Psoas muscle (tissue), 8 donors: ENCODE measurements at regions of chrX and their contacts with region 1.

Region 1: DNA sequence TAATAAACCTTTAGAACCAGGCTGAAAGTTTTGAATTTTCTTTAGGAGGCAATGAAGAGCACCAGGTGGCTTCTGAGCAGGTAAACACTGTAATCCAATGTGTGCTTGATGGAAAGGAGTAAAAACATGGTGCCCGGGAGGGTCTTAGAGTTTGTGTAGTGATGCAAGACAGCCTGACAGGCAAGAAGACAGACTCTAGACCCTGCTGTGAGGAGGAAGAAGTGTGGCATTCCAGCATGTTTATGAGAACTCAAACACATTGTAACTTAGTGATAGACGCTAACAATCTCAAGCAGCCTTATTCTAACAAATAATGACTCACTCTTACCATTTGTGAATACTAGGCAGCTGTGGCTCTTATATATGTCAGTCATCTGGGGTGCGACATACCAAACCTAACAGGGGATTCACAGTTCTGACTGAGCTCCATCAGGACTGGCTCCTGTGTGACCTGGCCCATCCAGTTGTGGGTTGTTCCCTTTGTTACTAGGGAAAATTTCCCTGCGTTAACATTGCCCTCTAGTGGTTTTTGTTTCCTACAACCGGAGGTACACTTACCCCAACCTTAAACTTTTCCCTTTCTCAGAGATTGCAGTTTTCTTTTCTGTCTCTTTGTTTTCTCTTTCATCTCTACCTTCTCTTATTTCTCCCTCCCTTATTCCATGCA is 53.8 kb downstream of the VSIG4 start:
- DNase-seq: no peak
- ATAC-seq: peak in 3 of 4 donors; percentile 51 to 69 (median 59)
- H3K4me3 ChIP-seq: no peak overlapping the region
- H3K27ac ChIP-seq: no peak overlapping the region
- H3K4me1 ChIP-seq: no peaks in the 10 kb centered on the region
- H3K27me3 ChIP-seq: peaks cover 0 to 13% (median 0%) of the 10 kb centered on the region in 3 donors
- CTCF ChIP-seq: peak; percentile 56

Region 2: GRCh38 chrX:65581661-65582339 is 404.3 kb before region 1 on chrX:
- intact Hi-C with region 1: loop called (anchors 1 to 5 kb)
- DNase-seq: peak in 1 of 2 donors; percentile 37
- ATAC-seq: peak; percentile 55 to 85 (median 76)
- H3K4me3 ChIP-seq: no peak overlapping the region
- H3K27ac ChIP-seq: no peak overlapping the region
- H3K4me1 ChIP-seq: no peaks in the 10 kb centered on the region
- H3K27me3 ChIP-seq: peaks cover 0 to 22% (median 0%) of the 10 kb centered on the region in 3 donors
- CTCF ChIP-seq: peak; percentile 76

Region 3: GRCh38 chrX:65595460-65595876 is 390.6 kb before region 1 on chrX:
- intact Hi-C with region 1: loop called in 1 of 2 experiments (anchors 5 kb)
- DNase-seq: peak; percentile 91 to 93
- ATAC-seq: peak; percentile 90 to 98 (median 94)
- H3K4me3 ChIP-seq: no peak overlapping the region
- H3K27ac ChIP-seq: peak overlapping the region; percentile 58
- H3K4me1 ChIP-seq: peaks cover 8% of the 10 kb centered on the region
- H3K27me3 ChIP-seq: peaks cover 0 to 3% (median 0%) of the 10 kb centered on the region in 3 donors
- CTCF ChIP-seq: peak; percentile 96

Region 4: GRCh38 chrX:65745992-65746391 is 240.1 kb before region 1 on chrX:
- intact Hi-C with region 1: loop called in 1 of 2 experiments (anchors 10 kb)
- DNase-seq: no peak
- ATAC-seq: no peak
- H3K4me3 ChIP-seq: no peak overlapping the region
- H3K27ac ChIP-seq: no peak overlapping the region
- H3K4me1 ChIP-seq: no peaks in the 10 kb centered on the region
- H3K27me3 ChIP-seq: no peaks in the 10 kb centered on the region
- CTCF ChIP-seq: no peak

Region 5: DNA sequence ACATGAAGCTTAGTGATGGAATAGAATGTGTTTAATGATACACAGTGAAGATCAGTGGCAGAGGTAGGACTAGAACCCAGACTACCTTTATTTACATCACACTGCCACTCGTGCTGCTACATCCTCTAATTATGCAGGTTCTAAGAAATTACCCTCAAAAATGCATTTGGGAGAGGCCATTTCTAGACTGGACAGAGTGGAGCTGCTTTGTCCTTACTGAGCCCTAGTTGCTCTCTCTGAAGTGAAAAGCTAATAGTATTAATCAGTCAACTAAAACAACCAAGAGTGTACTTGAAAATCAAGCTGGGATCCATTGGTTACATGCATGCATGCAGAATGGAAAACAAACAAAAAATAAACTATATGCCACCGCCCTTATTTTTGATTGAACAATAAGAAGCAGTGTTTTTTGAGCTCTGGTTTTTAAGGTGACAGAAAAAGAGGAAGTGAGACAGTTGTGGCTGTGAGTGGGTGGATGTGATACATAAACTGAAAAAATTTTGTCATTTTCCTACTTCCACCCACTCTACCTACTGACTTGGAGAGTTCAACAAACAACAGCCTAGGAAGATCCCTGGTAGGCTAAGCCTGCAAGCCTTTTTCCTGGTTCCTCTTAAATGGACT is 60.7 kb after region 1 on chrX:
- intact Hi-C with region 1: no loop called
- DNase-seq: no peak
- ATAC-seq: no peak
- H3K4me3 ChIP-seq: no peak overlapping the region
- H3K27ac ChIP-seq: no peak overlapping the region
- H3K4me1 ChIP-seq: no peaks in the 10 kb centered on the region
- H3K27me3 ChIP-seq: peaks cover 0 to 9% (median 0%) of the 10 kb centered on the region in 3 donors
- CTCF ChIP-seq: no peak